GM10248 (cell line): ENCODE measurements at regions of chr19 and their contacts with region 1.

Region 1: DNA sequence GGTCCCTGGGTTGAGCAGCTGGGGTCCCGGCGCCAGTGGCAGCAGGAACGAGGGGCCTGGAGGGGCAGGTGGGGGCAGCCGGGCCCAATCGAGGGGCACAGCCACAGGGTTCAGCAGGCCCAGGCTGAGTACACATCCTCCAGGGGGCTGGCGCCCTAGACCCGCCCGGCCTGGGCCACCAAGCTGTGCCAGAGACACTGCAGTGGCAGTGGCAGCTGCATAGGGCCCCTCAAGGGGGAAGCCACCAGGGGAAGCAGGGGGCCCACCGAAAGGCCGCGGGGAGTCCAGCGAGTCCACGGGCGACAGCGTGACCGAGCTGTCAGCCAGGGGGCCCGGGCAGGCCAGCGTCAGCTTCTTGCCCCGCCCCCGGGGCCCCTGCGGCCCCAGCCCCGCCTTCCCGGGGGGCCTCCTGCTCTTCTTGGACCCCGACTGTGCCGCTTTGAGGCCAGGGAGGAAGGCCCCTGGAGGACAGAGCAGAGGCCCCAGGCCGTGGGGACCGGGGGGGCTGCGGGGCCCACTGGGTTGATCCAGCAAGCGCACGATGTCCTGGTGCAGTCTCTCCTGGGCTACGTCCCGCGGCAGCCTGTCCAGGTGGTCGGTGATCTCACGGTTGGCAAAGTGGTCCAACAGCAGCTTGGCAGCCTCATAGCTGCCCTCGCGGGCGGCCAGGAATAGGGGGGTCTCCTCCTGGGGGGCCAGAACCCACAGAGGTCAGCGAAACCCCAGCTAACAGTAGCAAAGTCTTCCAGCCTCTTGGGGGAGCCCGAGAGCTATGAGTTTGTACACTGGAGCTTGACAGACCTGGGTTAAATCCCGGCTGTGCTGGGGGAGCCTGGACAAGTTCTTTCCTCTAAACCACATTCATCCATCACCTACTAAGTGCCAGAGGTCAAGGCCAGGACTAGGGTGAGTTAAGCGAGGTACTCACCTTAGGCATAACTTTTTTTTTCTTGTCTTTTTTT is 39.5 kb downstream of the NOTCH3 start:
- DNase-seq: peak; percentile 70
- CTCF ChIP-seq: peak; percentile 68

Region 2: DNA sequence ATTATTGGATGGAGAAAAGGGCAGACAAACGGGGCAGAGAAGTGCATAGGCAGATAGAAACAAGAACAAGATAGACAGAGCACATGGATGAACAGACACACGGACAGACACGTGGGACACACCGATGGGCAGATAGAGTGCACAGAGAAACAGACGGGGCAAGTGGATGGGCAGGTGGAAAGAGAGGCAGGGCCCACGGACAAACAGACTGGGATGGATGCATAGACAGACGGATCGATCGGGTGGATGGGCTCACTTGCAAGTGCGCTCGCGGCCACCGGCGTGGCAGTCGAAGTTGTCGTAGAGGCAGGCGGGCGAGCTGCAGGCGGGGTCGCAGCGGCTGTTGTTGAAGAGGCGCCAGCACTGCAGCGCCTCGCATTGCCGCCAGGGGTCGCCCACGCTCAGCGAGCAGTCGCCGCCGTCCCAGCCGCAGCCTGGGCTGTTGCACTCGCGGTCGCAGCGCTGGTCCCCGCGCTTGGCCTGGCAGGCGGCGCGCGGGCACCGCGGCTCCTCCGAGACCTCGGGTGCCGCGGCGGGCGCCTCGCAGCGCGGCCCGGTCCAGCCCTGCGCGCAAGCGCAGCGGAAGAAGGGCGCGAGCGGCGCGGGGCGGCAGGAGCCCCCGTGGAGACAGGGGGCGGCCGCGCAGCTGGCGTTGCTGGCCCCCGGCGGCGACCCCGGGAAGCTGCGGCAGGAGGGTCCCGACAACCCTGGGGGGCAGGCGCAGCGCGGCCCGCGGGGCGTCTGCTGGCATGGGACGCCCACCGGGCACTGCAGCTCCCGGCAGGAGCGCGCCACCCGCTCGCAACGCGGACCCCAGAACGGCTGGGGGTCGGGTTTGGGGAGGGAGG is 16.2 kb after region 1 on chr19:
- CTCF ChIA-PET with region 1: interaction called, 11 read pairs
- POLR2A ChIA-PET with region 1: no interaction called
- DNase-seq: peak; percentile 90
- CTCF ChIP-seq: peak; percentile 96